Gastrocnemius medialis (tissue), 4 donors: ENCODE measurements at regions of chr1 and their contacts with region 1.

Region 1: GRCh38 chr1:155261852-155262673 is at the start of gene SCAMP3:
- DNase-seq: peak; percentile 98 to 99
- ATAC-seq: peak; percentile 100
- H3K4me3 ChIP-seq: peak within 1 kb of the TSS; percentile 71 to 86 (median 76)
- H3K27ac ChIP-seq: peak within 1 kb of the TSS; percentile 79 to 90 (median 88)
- H3K4me1 ChIP-seq: peaks cover 20 to 26% of the 10 kb centered on the region in 2 donors
- H3K27me3 ChIP-seq: no peaks in the 10 kb centered on the region
- CTCF ChIP-seq: no peak
- POLR2A ChIP-seq: peak; percentile 67 to 83
- total RNA-seq, gene SCAMP3: 60.0 to 108 (median 79.3) TPM

Region 2: GRCh38 chr1:155277070-155277895 is 15.2 kb after region 1 on chr1 and contains the start of gene HCN3:
- in situ Hi-C with region 1: no loop called
- intact Hi-C with region 1: loop called (anchors 1 kb)
- DNase-seq: peak; percentile 96
- ATAC-seq: peak; percentile 83 to 88
- H3K4me3 ChIP-seq: peak within 1 kb of the TSS; percentile 78 to 97 (median 80)
- H3K27ac ChIP-seq: peak within 1 kb of the TSS; percentile 66 to 71 (median 68)
- H3K4me1 ChIP-seq: peaks cover 12 to 25% of the 10 kb centered on the region in 2 donors
- H3K27me3 ChIP-seq: no peaks in the 10 kb centered on the region
- CTCF ChIP-seq: peak; percentile 55 to 83 (median 65)
- POLR2A ChIP-seq: no peak
- total RNA-seq, gene HCN3: 0.18 to 1.5 (median 1.1) TPM

Region 3: DNA sequence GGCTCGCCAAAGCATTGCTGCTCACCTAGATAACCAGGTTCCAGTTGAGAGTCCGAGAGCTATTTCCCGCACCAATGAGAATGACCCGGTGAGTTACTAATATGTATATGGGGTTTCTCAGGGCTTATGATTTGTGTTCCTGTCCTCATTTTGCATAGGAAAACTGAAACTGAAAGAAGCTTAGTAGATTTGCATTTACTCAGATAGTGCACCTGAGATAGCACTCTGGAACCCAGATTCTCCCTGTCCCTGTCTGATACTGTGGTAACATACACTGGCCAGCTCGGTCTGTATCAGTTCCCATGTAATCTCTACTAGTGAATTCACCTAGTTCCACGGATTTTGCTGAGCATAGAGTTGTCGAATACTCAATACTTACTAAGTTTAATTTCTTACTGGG is 455.0 kb after region 1 on chr1:
- in situ Hi-C with region 1: no loop called
- intact Hi-C with region 1: no loop called
- DNase-seq: no peak
- ATAC-seq: no peak
- H3K4me3 ChIP-seq: no peak overlapping the region
- H3K27ac ChIP-seq: no peak overlapping the region
- H3K4me1 ChIP-seq: peaks cover 0 to 6% of the 10 kb centered on the region in 2 donors
- H3K27me3 ChIP-seq: no peaks in the 10 kb centered on the region
- CTCF ChIP-seq: no peak
- POLR2A ChIP-seq: no peak